K562 (cell line): ENCODE measurements at regions of chr1 and their contacts with region 1.

Region 1: GRCh38 chr1:207619871-207620542 is 24.9 kb upstream of the CR1L start:
- DNase-seq: peak; percentile 59 to 77 (median 66)
- ATAC-seq: peak; percentile 97
- H3K4me3 ChIP-seq: no peak overlapping the region
- H3K27ac ChIP-seq: no peak overlapping the region
- H3K4me1 ChIP-seq: peaks cover 0 to 7% of the 10 kb centered on the region in 2 experiments; a peak in 3 of 5 replicates
- H3K27me3 ChIP-seq: no peaks in the 10 kb centered on the region
- CTCF ChIP-seq: peak; percentile 69 to 87 (median 85)
- EP300 ChIP-seq: no peak
- POLR2A ChIP-seq: no peak
- RAD21 ChIP-seq: peak; percentile 44 to 78

Region 2: GRCh38 chr1:207579436-207579799 is 40.6 kb before region 1 on chr1:
- CTCF ChIA-PET with region 1: interaction called, 5 read pairs
- POLR2A ChIA-PET with region 1: no interaction called
- in situ Hi-C with region 1: no loop called
- intact Hi-C with region 1: loop called (anchors 1 kb)
- DNase-seq: peak; percentile 62 to 89 (median 70)
- ATAC-seq: peak; percentile 99
- H3K4me3 ChIP-seq: no peak overlapping the region
- H3K27ac ChIP-seq: no peak overlapping the region
- H3K4me1 ChIP-seq: peaks cover 0 to 5% of the 10 kb centered on the region in 2 experiments; a peak in 1 of 5 replicates
- H3K27me3 ChIP-seq: no peaks in the 10 kb centered on the region
- CTCF ChIP-seq: peak; percentile 88 to 95 (median 90)
- EP300 ChIP-seq: peak; percentile 24; the same call in 1 of the 2 replicates
- POLR2A ChIP-seq: no peak
- RAD21 ChIP-seq: peak; percentile 95 to 98

Region 3: GRCh38 chr1:207605444-207606361 is 14.3 kb before region 1 on chr1:
- CTCF ChIA-PET with region 1: no interaction called
- POLR2A ChIA-PET with region 1: interaction called, 13 read pairs
- in situ Hi-C with region 1: no loop called
- intact Hi-C with region 1: no loop called
- DNase-seq: peak; percentile 26 to 62 (median 32)
- ATAC-seq: peak; percentile 90
- H3K4me3 ChIP-seq: no peak overlapping the region
- H3K27ac ChIP-seq: peak overlapping the region; percentile 20
- H3K4me1 ChIP-seq: peaks cover 0 to 8% of the 10 kb centered on the region in 2 experiments; a peak in 2 of 5 replicates
- H3K27me3 ChIP-seq: no peaks in the 10 kb centered on the region
- CTCF ChIP-seq: peak in 2 of 3 experiments; percentile 31 to 33; a peak in 2 of 6 replicates
- EP300 ChIP-seq: no peak
- POLR2A ChIP-seq: peak; percentile 94
- RAD21 ChIP-seq: no peak

Region 4: DNA sequence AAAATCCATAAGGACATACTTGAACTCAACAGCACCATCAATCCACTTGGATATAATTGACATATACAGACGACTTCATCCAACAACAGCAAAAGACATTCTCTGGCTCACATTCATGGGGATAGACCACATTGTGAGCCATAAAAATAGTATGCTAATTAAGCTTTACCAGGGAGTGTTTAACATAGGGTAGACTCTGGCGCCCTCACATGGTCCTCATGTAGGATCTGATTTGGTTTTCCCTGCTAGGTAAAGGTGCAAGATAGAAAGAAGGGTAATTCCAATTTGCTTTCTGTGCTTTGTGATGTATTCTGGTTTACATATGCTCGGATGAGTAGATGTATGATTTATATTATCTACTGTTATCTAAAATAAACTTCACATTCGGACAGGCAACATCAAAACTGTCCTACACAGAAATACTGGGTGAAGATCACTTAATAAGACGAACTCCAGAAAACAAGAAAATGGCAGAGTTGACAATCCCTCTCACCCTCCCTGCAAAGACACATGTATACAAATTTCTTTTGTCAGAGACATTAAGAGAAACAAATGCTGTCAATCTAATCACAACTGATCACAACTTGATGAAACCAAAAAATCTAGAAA is 52.6 kb after region 1 on chr1:
- CTCF ChIA-PET with region 1: interaction called, 3 read pairs
- POLR2A ChIA-PET with region 1: interaction called, 3 read pairs
- in situ Hi-C with region 1: loop called (anchors 5 kb)
- intact Hi-C with region 1: loop called (anchors 1 kb)
- DNase-seq: peak; percentile 48 to 79 (median 66)
- ATAC-seq: peak; percentile 87
- H3K4me3 ChIP-seq: no peak overlapping the region
- H3K27ac ChIP-seq: no peak overlapping the region
- H3K4me1 ChIP-seq: peaks cover 11 to 32% of the 10 kb centered on the region in 2 experiments; a peak in 4 of 5 replicates
- H3K27me3 ChIP-seq: no peaks in the 10 kb centered on the region
- CTCF ChIP-seq: peak; percentile 62 to 87 (median 78)
- EP300 ChIP-seq: no peak
- POLR2A ChIP-seq: no peak
- RAD21 ChIP-seq: peak; percentile 90 to 96